Panc1 (cell line): ENCODE measurements at regions of chr1 and their contacts with region 1.

Region 1: DNA sequence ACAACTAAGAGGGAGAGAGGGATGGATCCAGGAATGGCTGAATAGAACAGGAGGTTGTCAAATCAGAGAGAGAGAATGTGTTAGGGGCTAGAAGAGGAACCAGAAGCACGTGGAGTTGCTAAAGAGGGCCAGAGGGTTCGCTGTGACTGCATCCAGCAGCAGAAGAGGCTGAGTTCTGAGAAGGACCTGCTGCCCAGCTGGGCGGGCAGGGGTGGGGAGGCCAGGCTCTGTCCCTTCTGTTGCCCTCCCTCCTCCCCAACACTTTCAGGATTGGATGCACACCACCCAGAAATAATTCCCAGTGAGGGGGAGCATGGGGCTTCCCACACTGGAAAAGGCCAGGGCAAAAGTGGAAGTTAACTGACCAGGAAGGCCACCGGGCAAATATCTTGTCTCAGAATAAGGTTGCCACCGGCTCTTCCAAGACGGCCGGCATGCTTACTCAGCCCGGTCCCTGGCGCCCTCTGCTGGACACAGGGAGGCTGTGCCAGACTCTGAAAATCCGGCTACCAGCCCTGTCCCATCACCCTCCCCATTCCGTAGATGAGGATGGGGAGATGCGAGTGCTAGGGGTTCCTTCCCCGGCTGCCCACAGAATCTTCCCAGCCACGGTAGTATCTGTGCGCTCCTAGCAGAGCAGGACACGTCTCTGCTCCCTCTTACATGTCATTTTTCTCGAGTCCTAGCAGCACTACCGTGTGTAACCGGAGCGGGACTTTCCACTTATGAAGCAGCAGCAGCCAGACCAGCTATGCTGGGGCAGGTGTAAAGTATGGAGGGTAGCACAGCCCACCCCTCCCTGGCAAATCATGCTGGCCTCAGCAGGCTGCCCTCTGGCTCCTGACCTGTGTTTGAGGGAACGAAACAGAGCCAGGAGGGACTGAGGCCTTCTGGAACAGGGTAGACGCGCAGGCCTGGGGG is 46.8 kb upstream of the A3GALT2 start:
- DNase-seq: no peak
- ATAC-seq: peak; percentile 94
- H3K4me3 ChIP-seq: no peak overlapping the region
- H3K27ac ChIP-seq: 0 out of 2 replicates have a peak overlapping the region, but pooled peaks have one; percentile 34
- H3K4me1 ChIP-seq: peaks cover 12% of the 10 kb centered on the region
- H3K27me3 ChIP-seq: no peaks in the 10 kb centered on the region
- CTCF ChIP-seq: peak; percentile 97

Region 2: GRCh38 chr1:33094971-33095604 is 272.7 kb before region 1 on chr1:
- CTCF ChIA-PET with region 1: no interaction called
- POLR2A ChIA-PET with region 1: no interaction called
- in situ Hi-C with region 1: no loop called
- intact Hi-C with region 1: loop called (anchors 10 kb)
- DNase-seq: peak; percentile 77
- ATAC-seq: peak; percentile 56; the same call in 1 of the 2 replicates
- H3K4me3 ChIP-seq: no peak overlapping the region
- H3K27ac ChIP-seq: no peak overlapping the region
- H3K4me1 ChIP-seq: 0 out of 2 replicates have a peak, but pooled peaks cover 7% of the 10 kb centered on the region
- H3K27me3 ChIP-seq: no peaks in the 10 kb centered on the region
- CTCF ChIP-seq: peak; percentile 98

Region 3: GRCh38 chr1:33219881-33220661 is 147.7 kb before region 1 on chr1:
- CTCF ChIA-PET with region 1: no interaction called
- POLR2A ChIA-PET with region 1: no interaction called
- in situ Hi-C with region 1: no loop called
- intact Hi-C with region 1: loop called (anchors 2 kb)
- DNase-seq: no peak
- ATAC-seq: peak; percentile 70
- H3K4me3 ChIP-seq: no peak overlapping the region
- H3K27ac ChIP-seq: no peak overlapping the region
- H3K4me1 ChIP-seq: no peaks in the 10 kb centered on the region; the same call in 1 of the 2 replicates
- H3K27me3 ChIP-seq: no peaks in the 10 kb centered on the region
- CTCF ChIP-seq: no peak

Region 4: GRCh38 chr1:33825506-33825905 is 457.8 kb after region 1 on chr1:
- CTCF ChIA-PET with region 1: no interaction called
- POLR2A ChIA-PET with region 1: no interaction called
- in situ Hi-C with region 1: no loop called
- intact Hi-C with region 1: no loop called
- DNase-seq: no peak
- ATAC-seq: no peak
- H3K4me3 ChIP-seq: no peak overlapping the region
- H3K27ac ChIP-seq: no peak overlapping the region
- H3K4me1 ChIP-seq: no peaks in the 10 kb centered on the region
- H3K27me3 ChIP-seq: peaks cover 2% of the 10 kb centered on the region; the same call in 1 of the 2 replicates
- CTCF ChIP-seq: no peak